HCT116 (cell line): ENCODE measurements at regions of chr15 and their contacts with region 1.

Region 1: DNA sequence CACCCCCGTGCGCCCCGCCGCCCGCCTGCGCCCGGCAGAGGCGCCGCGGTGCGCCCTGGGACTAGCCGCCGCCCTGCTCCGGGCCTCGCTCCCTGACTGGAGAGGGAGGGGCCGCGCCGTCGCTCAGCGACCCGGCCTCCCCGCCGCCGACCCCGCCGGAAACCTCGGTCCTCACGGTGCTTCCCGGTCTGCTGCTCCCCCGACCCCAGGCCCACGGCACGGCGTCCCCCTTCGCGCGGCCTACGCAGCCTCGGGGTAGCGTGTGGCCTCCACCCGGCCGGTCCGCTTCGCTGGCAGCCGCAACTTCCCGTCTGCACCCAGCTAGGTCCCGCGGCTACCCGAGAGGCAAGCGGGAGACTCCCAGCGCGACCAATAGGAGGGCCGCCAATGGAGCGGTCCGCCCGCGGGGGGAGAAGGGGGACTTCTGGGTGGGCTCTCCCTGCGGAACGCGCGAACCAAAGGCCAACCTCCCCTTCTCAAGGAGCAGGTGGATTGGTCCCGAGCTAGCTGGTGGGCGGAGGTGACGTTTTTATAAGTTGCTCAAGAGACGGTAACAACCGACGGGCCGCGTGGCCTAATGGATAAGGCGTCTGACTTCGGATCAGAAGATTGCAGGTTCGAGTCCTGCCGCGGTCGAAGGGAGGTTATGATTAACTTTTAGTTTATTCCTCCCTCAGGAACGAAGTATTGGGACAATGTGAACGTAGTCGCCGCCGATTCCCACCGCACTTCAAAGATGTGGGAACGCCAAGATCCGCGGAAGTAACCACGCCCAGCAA is at the start of gene POLG:
- DNase-seq: peak; percentile 98
- ATAC-seq: peak; percentile 90
- H3K4me3 ChIP-seq: peak within 1 kb of the TSS; percentile 92 to 94
- H3K27ac ChIP-seq: peak within 1 kb of the TSS; percentile 85
- H3K4me1 ChIP-seq: peaks cover 9 to 25% of the 10 kb centered on the region in 2 experiments
- H3K27me3 ChIP-seq: no peaks in the 10 kb centered on the region
- CTCF ChIP-seq: no peak
- POLR2A ChIP-seq: peak; percentile 95
- RAD21 ChIP-seq: no peak
- total RNA-seq, gene POLG: 72.7 TPM

Region 2: GRCh38 chr15:89243691-89244471 is 90.8 kb before region 1 on chr15 and contains the start of gene FANCI:
- CTCF ChIA-PET with region 1: no interaction called
- POLR2A ChIA-PET with region 1: no interaction called
- RAD21 ChIA-PET with region 1: no interaction called
- intact Hi-C with region 1: loop called (anchors 1 kb)
- DNase-seq: peak; percentile 89
- ATAC-seq: peak; percentile 94
- H3K4me3 ChIP-seq: peak within 1 kb of the TSS; percentile 76 to 78
- H3K27ac ChIP-seq: peak within 1 kb of the TSS; percentile 79
- H3K4me1 ChIP-seq: peaks cover 4 to 17% of the 10 kb centered on the region in 2 experiments; a peak in 3 of 4 replicates
- H3K27me3 ChIP-seq: no peaks in the 10 kb centered on the region
- CTCF ChIP-seq: peak; percentile 48 to 71 (median 58); a peak in 4 of 6 replicates
- POLR2A ChIP-seq: peak; percentile 51
- RAD21 ChIP-seq: peak; percentile 73
- total RNA-seq, gene FANCI: 112 TPM

Region 3: GRCh38 chr15:89389841-89390603 is 55.3 kb after region 1 on chr15:
- CTCF ChIA-PET with region 1: no interaction called
- POLR2A ChIA-PET with region 1: no interaction called
- RAD21 ChIA-PET with region 1: no interaction called
- intact Hi-C with region 1: loop called (anchors 2 kb)
- DNase-seq: no peak
- ATAC-seq: no peak; the same call in 1 of the 2 replicates
- H3K4me3 ChIP-seq: no peak overlapping the region
- H3K27ac ChIP-seq: no peak overlapping the region
- H3K4me1 ChIP-seq: no peaks in the 10 kb centered on the region
- H3K27me3 ChIP-seq: no peaks in the 10 kb centered on the region
- CTCF ChIP-seq: no peak
- POLR2A ChIP-seq: no peak
- RAD21 ChIP-seq: no peak